ENCODE measurements at regions of chr11 and their contacts with region 1.

Region 1: DNA sequence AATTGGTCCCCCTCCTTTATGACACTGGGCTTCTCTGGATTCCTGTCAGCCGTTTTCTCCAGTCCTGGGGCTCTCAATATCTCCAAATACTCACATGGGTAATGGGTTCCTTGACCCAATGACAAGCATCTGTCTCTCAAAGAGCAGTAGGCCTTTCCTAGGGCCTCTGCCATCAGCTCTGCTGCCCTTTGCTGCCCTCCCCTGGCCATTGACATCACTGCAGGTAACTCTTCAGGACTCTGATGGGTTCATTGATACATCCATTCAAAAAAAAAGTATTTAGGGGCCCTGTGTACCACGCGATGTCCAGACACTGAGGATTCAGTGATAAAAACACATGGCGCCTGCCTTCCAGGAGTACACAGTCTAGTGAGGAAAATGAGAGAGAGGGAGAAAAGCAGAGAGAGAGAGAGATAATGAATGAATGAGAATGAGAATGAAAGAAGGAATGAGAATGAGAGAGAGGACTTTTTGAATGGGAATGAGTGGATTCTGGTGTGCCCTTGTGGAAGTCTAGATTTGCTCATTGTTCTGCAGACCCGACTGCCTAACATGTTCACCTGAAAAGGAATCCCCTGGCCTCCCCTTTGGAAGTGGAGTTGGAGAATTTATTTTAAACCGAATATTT is 42.6 kb upstream of the OLFML1 start:
- DNase-seq: peak; percentile 83
- H3K4me3 Mint-ChIP-seq: no peak overlapping the region
- H3K27ac Mint-ChIP-seq: no peak overlapping the region
- H3K4me1 Mint-ChIP-seq: no peaks in the 10 kb centered on the region
- H3K27me3 Mint-ChIP-seq: no peaks in the 10 kb centered on the region

Region 2: GRCh38 chr11:6812390-6813005 is 630.2 kb before region 1 on chr11:
- CTCF ChIA-PET with region 1: interaction called, 9 read pairs
- POLR2A ChIA-PET with region 1: no interaction called
- intact Hi-C with region 1: loop called (anchors 1 kb)
- DNase-seq: peak; percentile 31
- H3K4me3 Mint-ChIP-seq: no peak overlapping the region
- H3K27ac Mint-ChIP-seq: no peak overlapping the region
- H3K4me1 Mint-ChIP-seq: no peaks in the 10 kb centered on the region
- H3K27me3 Mint-ChIP-seq: peaks cover 25% of the 10 kb centered on the region

Region 3: DNA sequence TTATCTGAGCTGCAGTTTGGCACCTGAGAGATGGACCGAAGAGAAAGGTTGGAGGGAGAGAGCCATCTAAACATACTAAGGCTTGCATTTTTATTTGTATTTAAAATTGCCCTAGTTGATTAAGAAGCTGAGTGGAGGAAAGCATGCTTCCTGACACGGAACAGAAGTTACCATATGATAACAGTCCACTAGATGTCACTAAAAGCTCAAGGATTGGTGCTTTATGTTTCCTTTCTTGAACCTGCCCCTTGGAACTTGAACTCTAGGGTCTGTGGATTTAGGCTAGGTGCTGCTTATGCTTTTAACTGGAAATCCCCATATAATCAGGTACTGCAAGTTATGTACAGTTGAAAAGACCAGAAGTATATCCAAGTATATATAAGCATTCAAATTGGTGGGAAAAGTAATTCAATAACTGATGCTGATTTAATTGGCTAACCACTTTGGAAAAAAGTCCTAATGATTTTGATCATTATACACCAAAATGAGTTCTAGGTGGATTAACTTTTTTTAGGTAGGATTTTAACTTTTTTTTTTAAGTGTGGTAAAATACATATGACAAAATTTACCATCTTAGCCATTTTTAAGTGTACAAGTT is 344.4 kb before region 1 on chr11:
- CTCF ChIA-PET with region 1: interaction called, 35 read pairs
- POLR2A ChIA-PET with region 1: no interaction called
- intact Hi-C with region 1: loop called (anchors 1 kb)
- DNase-seq: no peak
- H3K4me3 Mint-ChIP-seq: no peak overlapping the region
- H3K27ac Mint-ChIP-seq: no peak overlapping the region
- H3K4me1 Mint-ChIP-seq: no peaks in the 10 kb centered on the region
- H3K27me3 Mint-ChIP-seq: peaks cover 3% of the 10 kb centered on the region

Region 4: DNA sequence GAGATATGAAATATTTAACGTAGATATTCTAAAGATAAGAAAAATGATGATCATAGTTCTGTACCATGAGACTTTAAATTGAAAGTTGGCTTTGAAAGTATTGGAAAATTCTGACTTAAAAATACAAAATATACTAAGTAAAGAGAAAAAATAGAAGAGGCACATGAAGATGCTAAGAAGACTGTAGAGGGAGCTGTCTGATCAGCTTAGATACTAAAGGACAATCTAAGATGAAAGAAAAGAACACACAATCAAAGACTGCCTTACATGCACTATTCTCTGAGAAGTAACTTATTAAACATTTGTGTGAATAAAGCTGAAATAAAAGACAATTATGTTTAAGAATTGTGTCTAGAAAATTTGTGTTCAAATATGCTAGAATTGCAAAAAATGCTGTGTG is 298.8 kb before region 1 on chr11:
- CTCF ChIA-PET with region 1: interaction called, 18 read pairs
- POLR2A ChIA-PET with region 1: no interaction called
- intact Hi-C with region 1: loop called (anchors 5 kb)
- DNase-seq: no peak
- H3K4me3 Mint-ChIP-seq: no peak overlapping the region
- H3K27ac Mint-ChIP-seq: no peak overlapping the region
- H3K4me1 Mint-ChIP-seq: no peaks in the 10 kb centered on the region
- H3K27me3 Mint-ChIP-seq: no peaks in the 10 kb centered on the region

Region 5: DNA sequence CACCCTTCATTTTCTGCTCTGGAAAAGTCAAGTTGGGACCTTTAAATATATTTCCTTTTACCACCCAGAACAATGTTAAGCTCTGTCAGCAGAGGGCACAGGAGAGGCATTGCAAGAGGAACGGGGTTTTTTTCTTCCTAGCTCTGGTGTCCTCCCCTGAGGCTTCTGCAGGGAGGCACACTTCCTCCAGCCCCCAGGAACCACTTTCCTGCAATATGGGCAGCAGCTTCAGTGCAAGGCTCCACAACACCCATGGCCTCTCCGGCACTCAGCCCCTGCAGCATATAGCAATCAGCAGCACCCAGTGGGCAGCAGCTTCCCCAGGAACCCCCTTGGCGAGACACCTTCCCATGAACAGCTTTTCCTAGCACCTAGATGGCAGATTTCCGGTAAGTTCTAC is 89.6 kb before region 1 on chr11:
- CTCF ChIA-PET with region 1: interaction called, 41 read pairs
- POLR2A ChIA-PET with region 1: no interaction called
- intact Hi-C with region 1: loop called (anchors 1 kb)
- DNase-seq: peak; percentile 25
- H3K4me3 Mint-ChIP-seq: no peak overlapping the region
- H3K27ac Mint-ChIP-seq: no peak overlapping the region
- H3K4me1 Mint-ChIP-seq: no peaks in the 10 kb centered on the region
- H3K27me3 Mint-ChIP-seq: peaks cover 1% of the 10 kb centered on the region

Region 6: DNA sequence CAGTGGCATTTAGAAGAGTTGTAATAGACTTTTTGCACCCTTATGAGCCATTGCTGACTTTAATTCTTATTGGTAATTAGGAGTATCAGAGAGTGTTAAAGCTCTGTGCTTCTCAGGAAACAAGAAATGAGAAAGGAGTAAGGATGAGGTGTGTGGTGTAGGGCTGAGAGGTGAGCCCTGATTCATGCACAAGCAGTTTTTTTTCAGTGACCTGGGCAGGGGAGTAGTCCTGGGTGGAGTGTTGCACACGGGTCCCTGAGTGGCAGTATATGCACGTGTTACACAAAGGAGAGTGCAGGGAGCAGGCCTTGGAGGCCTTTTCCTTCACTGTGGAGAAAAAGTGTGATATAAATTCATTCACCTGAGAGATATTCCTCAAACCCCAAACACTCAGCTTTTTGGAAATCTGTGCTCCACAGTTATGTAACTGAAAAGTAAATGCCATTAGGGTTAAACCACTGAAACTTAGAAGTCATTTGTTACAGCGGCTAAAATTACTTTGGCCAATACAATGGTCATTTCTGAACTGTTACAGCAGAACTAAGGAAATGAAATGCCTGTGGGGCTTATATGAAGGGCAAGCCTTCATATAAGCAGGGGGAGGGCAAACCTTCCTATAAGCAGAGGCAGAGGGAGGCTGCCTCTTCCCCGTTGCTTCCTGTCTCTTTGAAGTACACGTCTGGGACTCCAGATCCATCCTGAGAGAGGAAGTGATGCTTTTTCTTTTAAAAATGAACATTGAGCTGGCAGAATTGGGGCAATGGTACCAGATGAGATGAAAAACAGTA is 20.0 kb before region 1 on chr11:
- CTCF ChIA-PET with region 1: interaction called, 12 read pairs
- POLR2A ChIA-PET with region 1: no interaction called
- intact Hi-C with region 1: no loop called
- DNase-seq: peak; percentile 20
- H3K4me3 Mint-ChIP-seq: no peak overlapping the region
- H3K27ac Mint-ChIP-seq: no peak overlapping the region
- H3K4me1 Mint-ChIP-seq: peaks cover 15% of the 10 kb centered on the region
- H3K27me3 Mint-ChIP-seq: no peaks in the 10 kb centered on the region

Measured in activated CD4-positive, alpha-beta memory T cell treated with anti-CD3 and anti-CD28 coated beads for 36 hours (primary cell).